ENCODE measurements at regions of chr16 and their contacts with region 1.

Region 1: DNA sequence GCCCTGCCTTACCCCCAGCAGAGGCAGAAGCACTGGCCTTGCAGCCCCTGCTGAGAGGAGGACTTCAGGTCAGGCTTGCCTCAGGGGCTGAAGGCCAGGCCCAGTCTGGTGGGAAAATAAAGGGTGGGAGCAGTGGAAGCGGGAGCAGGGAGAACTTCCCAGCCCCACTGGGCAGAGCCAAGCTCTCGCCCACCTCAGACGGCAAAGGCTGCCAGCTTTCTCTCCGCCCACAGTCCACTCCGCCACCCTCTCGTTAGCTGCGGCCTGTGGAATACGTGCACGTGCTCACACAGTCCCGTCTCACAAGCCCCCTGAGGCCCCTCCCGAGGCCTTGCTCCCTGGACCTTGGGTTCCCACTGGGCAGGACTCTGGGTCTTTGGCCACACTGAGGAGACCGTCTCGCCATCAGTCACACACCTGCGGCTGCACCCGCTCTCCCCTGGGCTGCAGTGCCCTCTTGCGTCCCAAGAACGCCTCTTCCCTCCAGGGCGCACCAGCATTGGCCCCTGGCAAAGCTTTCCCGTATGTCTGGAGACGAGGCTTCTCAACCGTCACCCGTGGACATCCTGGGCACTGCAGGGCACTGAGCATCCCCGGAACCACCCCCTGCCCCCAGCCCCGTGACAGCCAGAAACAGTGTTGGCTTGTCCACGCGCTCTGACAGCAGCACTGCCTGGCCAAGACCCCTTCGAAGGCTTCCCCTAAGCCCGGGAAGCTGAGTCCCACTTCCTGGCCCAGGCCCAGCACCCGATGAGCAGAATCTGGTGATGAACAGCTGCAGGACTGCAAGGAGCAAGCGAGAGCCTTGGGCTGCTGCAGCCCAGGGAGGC is 8.3 kb downstream of the MRPL28 start:
- DNase-seq: peak; percentile 58 to 85
- H3K4me3 ChIP-seq: no peak overlapping the region
- H3K27ac ChIP-seq: no peak overlapping the region
- H3K4me1 ChIP-seq: no peaks in the 10 kb centered on the region; a peak in 2 of 7 replicates
- H3K27me3 ChIP-seq: no peaks in the 10 kb centered on the region
- CTCF ChIP-seq: peak; percentile 91 to 96 (median 92)
- EP300 ChIP-seq: no peak
- POLR2A ChIP-seq: no peak
- RAD21 ChIP-seq: peak; percentile 94 to 96

Region 2: GRCh38 chr16:77807-78443 is 284.2 kb before region 1 on chr16 and contains the start of gene MPG:
- CTCF ChIA-PET with region 1: interaction called, 13 read pairs
- POLR2A ChIA-PET with region 1: no interaction called
- DNase-seq: peak in 1 of 2 experiments; percentile 87
- H3K4me3 ChIP-seq: peak within 1 kb of the TSS; percentile 54 to 78 (median 68)
- H3K27ac ChIP-seq: no peak within 1 kb of the TSS
- H3K4me1 ChIP-seq: peaks cover 6 to 60% (median 41%) of the 10 kb centered on the region in 4 experiments
- H3K27me3 ChIP-seq: peaks cover 0 to 4% (median 3%) of the 10 kb centered on the region in 4 experiments; a peak in 3 of 7 replicates
- CTCF ChIP-seq: no peak
- EP300 ChIP-seq: no peak
- POLR2A ChIP-seq: no peak; a peak in 1 of 3 replicates
- RAD21 ChIP-seq: no peak
- total RNA-seq, gene MPG: 35.8 and 37.6 TPM in 2 replicates

Region 3: DNA sequence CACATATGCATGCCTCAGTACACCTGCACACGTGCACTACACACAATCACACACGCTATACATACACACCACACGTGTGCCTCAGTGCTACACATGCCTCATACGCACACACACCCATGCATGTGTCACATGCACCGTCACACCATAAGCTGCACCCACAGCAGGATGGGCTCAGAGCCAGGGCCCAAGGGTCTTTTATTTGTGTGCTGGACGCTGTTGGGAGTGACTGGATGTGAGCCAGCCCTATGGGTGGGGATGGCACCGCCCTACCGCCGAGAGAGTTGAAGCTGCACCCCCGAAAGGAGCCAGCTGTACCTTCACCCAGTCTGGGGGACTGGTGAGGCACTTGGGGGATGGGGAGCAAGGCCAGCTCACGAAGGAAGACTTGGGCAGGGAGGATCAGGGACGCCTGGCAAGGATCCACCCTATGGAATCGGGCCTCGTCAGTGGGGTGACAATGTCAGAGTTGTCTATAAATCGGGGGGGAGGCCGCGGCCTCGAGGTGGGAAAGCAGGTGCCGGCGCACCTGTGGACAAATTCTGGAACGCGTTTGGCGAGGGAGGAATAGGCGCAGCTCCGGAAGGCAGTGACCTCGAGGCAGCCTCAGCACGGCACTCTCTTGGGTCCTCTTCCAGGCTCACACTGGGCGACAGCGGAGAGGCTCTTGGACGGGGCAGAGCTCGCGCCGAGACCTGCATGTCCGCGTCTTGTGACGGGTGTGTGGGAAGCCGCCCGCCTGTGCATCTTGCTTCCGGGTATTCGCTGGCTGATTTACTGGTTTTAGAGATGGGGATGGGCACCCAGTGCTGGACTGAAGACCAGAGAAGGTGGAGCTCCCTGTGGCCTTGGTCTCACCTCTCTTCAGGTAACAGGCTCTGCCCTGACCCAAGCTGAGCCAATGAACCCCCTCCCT is 93.7 kb before region 1 on chr16:
- CTCF ChIA-PET with region 1: interaction called, 10 read pairs
- POLR2A ChIA-PET with region 1: no interaction called
- DNase-seq: no peak
- H3K4me3 ChIP-seq: no peak overlapping the region
- H3K27ac ChIP-seq: no peak overlapping the region
- H3K4me1 ChIP-seq: no peaks in the 10 kb centered on the region; a peak in 1 of 7 replicates
- H3K27me3 ChIP-seq: no peaks in the 10 kb centered on the region
- CTCF ChIP-seq: no peak
- EP300 ChIP-seq: no peak
- POLR2A ChIP-seq: no peak
- RAD21 ChIP-seq: no peak

Region 4: DNA sequence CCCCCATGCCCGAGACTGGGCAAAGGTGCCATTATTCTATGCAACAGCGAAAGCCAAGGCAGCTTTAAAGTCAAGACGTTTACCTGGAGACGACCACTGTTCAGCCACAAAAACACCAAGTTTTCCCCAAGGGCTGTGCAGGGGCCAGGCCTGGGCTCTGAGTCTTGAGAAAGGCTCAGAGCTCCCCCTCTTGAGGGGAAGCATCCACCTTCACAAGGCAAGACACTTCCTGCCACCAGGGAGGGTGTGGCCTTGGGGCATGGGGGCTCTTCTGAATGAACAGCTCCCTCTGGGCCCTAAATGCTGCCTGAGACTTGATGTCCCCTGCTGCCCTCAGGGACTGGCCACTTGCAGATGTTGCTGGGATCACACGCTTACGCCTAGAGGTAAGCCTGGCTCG is 52.6 kb before region 1 on chr16:
- CTCF ChIA-PET with region 1: interaction called, 11 read pairs
- POLR2A ChIA-PET with region 1: no interaction called
- DNase-seq: no peak
- H3K4me3 ChIP-seq: no peak overlapping the region
- H3K27ac ChIP-seq: no peak overlapping the region
- H3K4me1 ChIP-seq: no peaks in the 10 kb centered on the region
- H3K27me3 ChIP-seq: no peaks in the 10 kb centered on the region
- CTCF ChIP-seq: peak in 1 of 3 experiments; percentile 19; a peak in 1 of 4 replicates
- EP300 ChIP-seq: no peak
- POLR2A ChIP-seq: no peak
- RAD21 ChIP-seq: peak; percentile 28 to 35

Region 5: DNA sequence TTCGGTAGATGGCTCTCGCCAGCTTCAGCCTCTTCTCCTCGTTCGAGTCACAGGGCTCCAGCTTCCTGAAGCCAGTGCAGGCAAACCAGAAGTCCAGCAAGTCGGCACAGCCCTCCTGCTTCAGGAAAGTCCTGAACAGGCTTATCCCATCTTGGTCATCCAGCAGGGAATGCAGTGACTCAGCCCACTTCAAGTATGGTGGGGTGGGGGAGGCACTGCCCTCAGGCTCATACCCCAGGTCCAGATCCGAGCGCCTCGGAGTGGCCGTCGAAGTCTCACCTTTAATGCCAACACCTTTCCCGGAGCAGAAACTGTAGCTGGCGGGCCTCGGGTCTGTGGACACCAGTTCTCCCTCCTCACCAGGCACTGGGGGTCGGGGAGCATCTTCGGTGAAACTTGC is 15.5 kb before region 1 on chr16:
- CTCF ChIA-PET with region 1: interaction called, 15 read pairs
- POLR2A ChIA-PET with region 1: interaction called, 3 read pairs
- DNase-seq: peak in 1 of 2 experiments; percentile 40
- H3K4me3 ChIP-seq: no peak overlapping the region
- H3K27ac ChIP-seq: no peak overlapping the region
- H3K4me1 ChIP-seq: peaks cover 0 to 2% (median 0%) of the 10 kb centered on the region in 4 experiments; a peak in 2 of 7 replicates
- H3K27me3 ChIP-seq: no peaks in the 10 kb centered on the region
- CTCF ChIP-seq: no peak
- EP300 ChIP-seq: no peak
- POLR2A ChIP-seq: no peak
- RAD21 ChIP-seq: no peak

Region 6: GRCh38 chr16:442976-443375 is 80.9 kb after region 1 on chr16:
- CTCF ChIA-PET with region 1: no interaction called
- POLR2A ChIA-PET with region 1: no interaction called
- DNase-seq: no peak
- H3K4me3 ChIP-seq: no peak overlapping the region
- H3K27ac ChIP-seq: no peak overlapping the region
- H3K4me1 ChIP-seq: no peaks in the 10 kb centered on the region
- H3K27me3 ChIP-seq: no peaks in the 10 kb centered on the region
- CTCF ChIP-seq: no peak
- EP300 ChIP-seq: no peak
- POLR2A ChIP-seq: no peak
- RAD21 ChIP-seq: no peak